HEK293 (cell line): ENCODE measurements at regions of chr4 and their contacts with region 1.

Region 1: GRCh38 chr4:42568610-42569207 is 88.2 kb downstream of the ATP8A1 start:
- H3K4me3 ChIP-seq: no peak overlapping the region
- H3K27ac ChIP-seq: no peak overlapping the region
- H3K4me1 ChIP-seq: no peaks in the 10 kb centered on the region
- CTCF ChIP-seq: no peak

Region 2: DNA sequence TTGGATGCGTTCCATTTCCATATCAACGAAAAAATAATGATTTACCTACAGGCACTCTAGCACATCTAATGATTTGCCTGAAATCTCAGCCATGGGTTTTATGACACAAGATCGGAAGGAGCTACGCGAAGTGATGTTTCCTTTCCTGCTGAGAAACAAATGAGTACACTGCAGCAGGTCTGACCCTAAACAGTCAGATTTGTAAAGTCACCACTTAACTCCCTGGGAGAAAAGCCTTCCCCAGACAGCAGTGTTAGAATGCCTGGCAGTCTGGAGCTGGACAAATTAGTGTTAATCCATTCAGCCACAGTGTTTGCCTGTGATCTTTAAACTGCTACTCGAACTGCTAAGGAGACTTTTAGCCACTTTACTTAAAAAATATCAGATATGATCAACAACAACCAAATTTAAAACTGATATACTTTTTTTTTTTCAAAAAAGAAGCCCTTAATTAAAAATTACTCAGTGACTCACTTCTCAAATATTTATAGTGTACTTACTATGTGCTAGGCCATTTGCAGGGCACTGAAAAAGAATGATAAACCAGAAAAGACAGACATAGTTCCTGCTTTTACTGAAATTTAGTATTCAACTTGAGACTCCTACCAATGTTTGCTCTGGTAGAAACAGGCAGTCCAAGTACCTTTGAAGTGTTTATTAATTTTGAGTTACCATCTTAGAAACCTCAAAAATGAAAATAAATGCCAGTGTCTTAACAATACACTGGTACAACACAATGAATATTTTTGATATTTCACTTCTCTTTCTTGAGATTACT is 66.9 kb before region 1 on chr4:
- CTCF ChIA-PET with region 1: no interaction called
- POLR2A ChIA-PET with region 1: no interaction called
- H3K4me3 ChIP-seq: no peak overlapping the region
- H3K27ac ChIP-seq: no peak overlapping the region
- H3K4me1 ChIP-seq: no peaks in the 10 kb centered on the region
- CTCF ChIP-seq: no peak

Region 3: DNA sequence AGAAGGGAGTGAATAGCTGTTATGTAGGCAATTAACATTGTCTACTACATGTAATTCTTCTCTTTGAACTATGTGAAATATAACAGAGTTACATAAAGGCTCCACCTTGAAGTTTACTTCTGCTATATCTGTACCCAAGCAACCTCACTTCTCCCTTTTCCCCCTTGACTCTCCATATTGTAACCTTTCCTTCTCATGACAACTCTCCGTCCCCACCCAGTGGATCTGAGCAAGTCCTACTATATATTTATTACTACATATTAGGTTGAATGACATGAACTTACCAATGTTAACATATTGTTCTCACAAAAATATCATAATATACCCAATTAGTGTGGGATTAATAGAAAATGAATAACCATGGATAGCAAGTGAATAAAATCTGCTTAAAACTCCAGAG is 181.4 kb after region 1 on chr4:
- CTCF ChIA-PET with region 1: interaction called, 13 read pairs
- POLR2A ChIA-PET with region 1: no interaction called
- H3K4me3 ChIP-seq: no peak overlapping the region
- H3K27ac ChIP-seq: no peak overlapping the region
- H3K4me1 ChIP-seq: no peaks in the 10 kb centered on the region
- CTCF ChIP-seq: no peak

Region 4: GRCh38 chr4:42865572-42866189 is 297.0 kb after region 1 on chr4:
- CTCF ChIA-PET with region 1: interaction called, 19 read pairs
- POLR2A ChIA-PET with region 1: no interaction called
- H3K4me3 ChIP-seq: no peak overlapping the region
- H3K27ac ChIP-seq: no peak overlapping the region
- H3K4me1 ChIP-seq: no peaks in the 10 kb centered on the region
- CTCF ChIP-seq: no peak